Prostate gland (tissue), 2 donors: ENCODE measurements at regions of chr17 and their contacts with region 1.

Region 1: GRCh38 chr17:9402590-9403199 is 172.9 kb downstream of the STX8 start:
- DNase-seq: no peak
- H3K4me3 ChIP-seq: no peak overlapping the region
- H3K27ac ChIP-seq: no peak overlapping the region
- H3K4me1 ChIP-seq: no peaks in the 10 kb centered on the region
- H3K27me3 ChIP-seq: no peaks in the 10 kb centered on the region
- CTCF ChIP-seq: peak in 3 of 4 experiments; percentile 9 to 21 (median 16)
- POLR2A ChIP-seq: no peak

Region 2: GRCh38 chr17:9575381-9576101 is 172.8 kb after region 1 on chr17 and contains the start of gene STX8:
- intact Hi-C with region 1: loop called (anchors 5 kb)
- DNase-seq: peak; percentile 87
- H3K4me3 ChIP-seq: peak within 1 kb of the TSS; percentile 65 to 73
- H3K27ac ChIP-seq: peak within 1 kb of the TSS in 1 of 2 donors; percentile 41
- H3K4me1 ChIP-seq: no peaks in the 10 kb centered on the region
- H3K27me3 ChIP-seq: no peaks in the 10 kb centered on the region
- CTCF ChIP-seq: peak in 2 of 4 experiments; percentile 5 to 8
- POLR2A ChIP-seq: no peak
- total RNA-seq, gene STX8: 46.6 to 72.4 TPM